Thyroid gland (tissue), 4 donors: ENCODE measurements at regions of chr14 and their contacts with region 1.

Region 1: GRCh38 chr14:73568381-73568781 is 632 bp upstream of the ACOT2 start:
- DNase-seq: no peak
- H3K4me3 ChIP-seq: peak overlapping the region in 1 of 3 donors; percentile 57
- H3K27ac ChIP-seq: peak overlapping the region in 2 of 3 donors; percentile 89 to 94
- H3K4me1 ChIP-seq: peaks cover 16 to 24% of the 10 kb centered on the region in 2 donors
- H3K27me3 ChIP-seq: no peaks in the 10 kb centered on the region
- CTCF ChIP-seq: no peak
- POLR2A ChIP-seq: no peak

Region 2: GRCh38 chr14:73503648-73504047 is 64.7 kb before region 1 on chr14:
- intact Hi-C with region 1: no loop called
- DNase-seq: no peak
- H3K4me3 ChIP-seq: no peak overlapping the region
- H3K27ac ChIP-seq: no peak overlapping the region
- H3K4me1 ChIP-seq: no peaks in the 10 kb centered on the region
- H3K27me3 ChIP-seq: no peaks in the 10 kb centered on the region
- CTCF ChIP-seq: no peak
- POLR2A ChIP-seq: no peak

Region 3: DNA sequence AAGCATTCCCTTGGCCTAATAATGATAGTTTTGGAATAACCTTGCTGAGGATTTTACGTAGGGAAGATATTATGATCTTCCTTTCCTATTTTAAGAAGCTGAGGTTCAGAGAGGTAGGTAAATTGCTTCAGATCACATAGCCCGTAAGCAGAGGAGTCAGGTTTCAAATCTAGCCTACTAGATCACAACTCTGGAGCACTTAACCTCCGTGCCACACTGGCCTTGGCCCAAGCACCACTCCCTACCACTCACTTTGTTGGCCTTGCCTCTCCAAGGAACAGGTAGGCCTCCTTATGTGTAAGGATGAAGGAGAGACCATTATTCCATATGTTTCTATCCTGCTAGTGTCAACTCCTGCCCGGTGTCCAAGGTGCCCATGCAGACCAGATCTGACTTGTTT is 43.9 kb before region 1 on chr14:
- intact Hi-C with region 1: loop called (anchors 10 kb)
- DNase-seq: peak; percentile 38 to 39
- H3K4me3 ChIP-seq: no peak overlapping the region
- H3K27ac ChIP-seq: no peak overlapping the region
- H3K4me1 ChIP-seq: peaks cover 4 to 15% of the 10 kb centered on the region in 2 donors
- H3K27me3 ChIP-seq: no peaks in the 10 kb centered on the region
- CTCF ChIP-seq: no peak
- POLR2A ChIP-seq: no peak

Region 4: GRCh38 chr14:73633116-73634010 is 65.0 kb after region 1 on chr14:
- intact Hi-C with region 1: loop called (anchors 10 kb)
- DNase-seq: peak; percentile 63 to 70
- H3K4me3 ChIP-seq: peak overlapping the region in 2 of 3 donors; percentile 21 to 32
- H3K27ac ChIP-seq: peak overlapping the region; percentile 63 to 67 (median 67)
- H3K4me1 ChIP-seq: peaks cover 2 to 5% of the 10 kb centered on the region in 2 donors
- H3K27me3 ChIP-seq: no peaks in the 10 kb centered on the region
- CTCF ChIP-seq: peak; percentile 80 to 92 (median 86)
- POLR2A ChIP-seq: peak in 1 of 2 donors; percentile 27

Region 5: DNA sequence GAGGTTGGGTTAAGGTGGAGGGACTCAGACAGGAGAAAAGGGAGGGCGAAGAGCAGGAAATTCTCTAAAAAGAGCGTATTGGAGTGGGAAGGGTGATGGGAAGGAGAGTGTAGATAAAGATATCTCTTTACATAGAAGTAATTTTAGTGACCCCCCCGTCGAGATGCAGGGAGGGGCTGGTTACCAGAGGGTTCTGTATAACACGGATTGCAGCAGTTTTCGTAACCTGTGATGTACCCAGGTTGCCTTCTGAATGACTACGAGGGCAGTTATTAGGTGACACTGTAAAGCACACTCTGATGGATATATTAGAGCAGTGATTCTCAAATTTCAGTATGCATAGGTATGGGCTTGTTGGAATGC is 76.8 kb after region 1 on chr14:
- intact Hi-C with region 1: no loop called
- DNase-seq: no peak
- H3K4me3 ChIP-seq: peak overlapping the region; percentile 48 to 87 (median 53)
- H3K27ac ChIP-seq: peak overlapping the region; percentile 8 to 78 (median 76)
- H3K4me1 ChIP-seq: peaks cover 5 to 10% of the 10 kb centered on the region in 2 donors
- H3K27me3 ChIP-seq: no peaks in the 10 kb centered on the region
- CTCF ChIP-seq: no peak
- POLR2A ChIP-seq: no peak